Ascending aorta (tissue), 2 donors: ENCODE measurements at regions of chr9 and their contacts with region 1.

Region 1: GRCh38 chr9:135907431-135908092 is at the start of gene CAMSAP1:
- DNase-seq: peak; percentile 53 to 95
- H3K4me3 ChIP-seq: peak within 1 kb of the TSS; percentile 89 to 97
- H3K27ac ChIP-seq: peak within 1 kb of the TSS; percentile 58 to 76
- H3K4me1 ChIP-seq: peaks cover 10 to 21% of the 10 kb centered on the region in 2 donors
- H3K27me3 ChIP-seq: no peaks in the 10 kb centered on the region
- CTCF ChIP-seq: no peak
- total RNA-seq, gene CAMSAP1: 10.1 TPM

Region 2: GRCh38 chr9:135500525-135501358 is 406.8 kb before region 1 on chr9 and contains the start of gene MRPS2:
- intact Hi-C with region 1: loop called (anchors 5 kb)
- DNase-seq: peak; percentile 38 to 93
- H3K4me3 ChIP-seq: peak within 1 kb of the TSS; percentile 73 to 75
- H3K27ac ChIP-seq: peak within 1 kb of the TSS; percentile 69 to 75
- H3K4me1 ChIP-seq: peaks cover 12 to 17% of the 10 kb centered on the region in 2 donors
- H3K27me3 ChIP-seq: no peaks in the 10 kb centered on the region
- CTCF ChIP-seq: peak; percentile 85 to 97 (median 93)
- total RNA-seq, gene MRPS2: 57.3 TPM

Region 3: DNA sequence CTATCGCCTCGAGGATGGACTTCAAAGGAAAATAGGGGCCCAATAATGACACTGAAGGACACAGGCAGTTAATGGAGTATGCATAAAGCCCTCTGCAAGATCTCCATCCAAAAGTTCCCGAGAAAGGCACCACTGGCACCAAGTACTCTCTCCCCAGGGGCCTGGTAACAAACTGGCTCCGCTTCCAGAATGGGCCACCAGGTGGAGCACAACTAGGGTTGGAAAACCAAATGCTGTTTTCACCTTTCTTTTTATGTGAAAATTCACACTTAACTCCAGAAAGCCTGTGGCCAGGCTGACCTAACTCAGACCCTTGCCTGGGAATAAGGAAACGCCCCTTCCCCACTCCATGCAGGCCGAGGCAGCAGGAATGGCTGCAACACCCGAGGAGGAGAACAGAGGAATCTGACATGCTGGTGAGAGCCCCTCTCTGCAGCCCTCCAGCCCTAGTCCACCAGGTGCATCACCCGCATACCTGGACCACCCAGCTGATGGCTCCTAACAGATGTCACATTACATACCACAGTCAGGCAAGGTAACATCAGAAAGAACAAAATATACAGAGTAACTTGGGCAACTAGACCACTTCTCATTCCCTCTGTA is 43.0 kb before region 1 on chr9:
- intact Hi-C with region 1: loop called (anchors 1 kb)
- DNase-seq: no peak
- H3K4me3 ChIP-seq: no peak overlapping the region
- H3K27ac ChIP-seq: no peak overlapping the region
- H3K4me1 ChIP-seq: no peaks in the 10 kb centered on the region
- H3K27me3 ChIP-seq: no peaks in the 10 kb centered on the region
- CTCF ChIP-seq: peak; percentile 66 to 80 (median 78)

Region 4: GRCh38 chr9:135949501-135950134 is 42.1 kb after region 1 on chr9:
- intact Hi-C with region 1: no loop called
- DNase-seq: no peak
- H3K4me3 ChIP-seq: no peak overlapping the region
- H3K27ac ChIP-seq: no peak overlapping the region
- H3K4me1 ChIP-seq: no peaks in the 10 kb centered on the region
- H3K27me3 ChIP-seq: no peaks in the 10 kb centered on the region
- CTCF ChIP-seq: no peak

Region 5: GRCh38 chr9:135961277-135961705 is 53.7 kb after region 1 on chr9 and contains the start of gene UBAC1:
- intact Hi-C with region 1: loop called (anchors 1 kb)
- DNase-seq: peak; percentile 86 to 98
- H3K4me3 ChIP-seq: peak within 1 kb of the TSS; percentile 67 to 96
- H3K27ac ChIP-seq: peak within 1 kb of the TSS; percentile 73 to 91
- H3K4me1 ChIP-seq: peaks cover 3 to 12% of the 10 kb centered on the region in 2 donors
- H3K27me3 ChIP-seq: no peaks in the 10 kb centered on the region
- CTCF ChIP-seq: peak in 2 of 3 experiments; percentile 13 to 70
- total RNA-seq, gene UBAC1: 31.0 TPM